Activated T-helper 2 cell treated with anti-CD3 and anti-CD28 coated beads, Interferon-gamma antibody, Interleukin-2, Interleukin-4, amounts not matched to agents 10 μg/mL and 5 μg/mL and 100 μg/mL, durations not matched to agents 14 hours and 24 hours and 36 hours (primary cell): ENCODE measurements at regions of chr1 and their contacts with region 1.

Region 1: DNA sequence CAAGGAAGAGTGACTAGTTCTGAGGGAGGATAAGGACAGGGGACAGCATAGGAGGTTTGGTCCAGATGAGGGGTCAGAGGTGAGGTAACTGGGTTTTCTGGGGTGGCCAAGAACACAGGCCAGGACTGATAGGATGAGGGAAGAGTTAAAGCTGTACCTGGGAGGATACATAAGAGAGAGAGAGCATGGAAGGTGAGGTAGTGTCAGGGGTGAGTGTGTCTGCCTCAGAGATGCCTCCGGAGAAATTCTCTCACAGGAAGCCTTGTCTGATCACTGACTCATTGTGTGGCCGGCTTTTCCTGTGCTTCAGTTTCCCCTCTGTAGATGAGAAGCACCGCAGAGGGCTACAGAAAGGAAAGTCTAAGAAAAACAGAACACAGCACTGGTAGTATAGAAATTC is 40.2 kb downstream of the FASLG start:
- DNase-seq: peak; percentile 72
- H3K4me3 Mint-ChIP-seq: peak overlapping the region; percentile 41
- H3K27ac Mint-ChIP-seq: peak overlapping the region; percentile 91
- H3K4me1 Mint-ChIP-seq: peaks cover 54% of the 10 kb centered on the region
- H3K27me3 Mint-ChIP-seq: no peaks in the 10 kb centered on the region

Region 2: DNA sequence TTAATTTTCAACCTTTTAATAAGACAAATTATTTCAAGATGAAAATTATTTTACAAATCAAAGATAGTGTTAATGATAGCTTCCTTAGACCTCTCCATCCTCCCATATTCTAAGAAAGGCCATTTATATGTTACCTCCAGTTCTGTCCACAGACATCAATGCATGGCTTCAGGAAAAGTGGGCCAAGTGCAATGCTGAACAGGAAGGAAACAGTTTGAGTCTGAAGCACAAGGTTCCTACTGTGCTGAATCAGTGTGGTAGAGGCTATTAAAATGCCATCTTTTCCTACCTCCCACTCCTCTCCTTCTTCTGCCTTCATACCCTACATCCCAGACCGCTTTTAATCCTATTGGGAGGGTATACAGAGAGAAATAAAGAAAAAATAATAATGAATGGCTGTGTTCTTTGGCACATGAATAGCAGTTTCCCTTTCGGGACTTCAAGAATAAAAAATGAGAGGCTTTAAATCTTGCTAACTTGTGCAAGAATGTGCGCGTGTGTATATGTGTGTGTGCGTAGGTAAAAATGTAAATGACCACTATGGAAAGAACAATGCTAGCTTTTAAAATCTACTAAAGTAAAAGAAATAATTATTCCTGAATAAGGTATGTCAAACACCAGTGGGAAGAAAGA is 341.2 kb before region 1 on chr1:
- intact Hi-C with region 1: loop called (anchors 5 kb)
- DNase-seq: no peak
- H3K4me3 Mint-ChIP-seq: no peak overlapping the region
- H3K27ac Mint-ChIP-seq: peak overlapping the region; percentile 82
- H3K4me1 Mint-ChIP-seq: peaks cover 52% of the 10 kb centered on the region
- H3K27me3 Mint-ChIP-seq: no peaks in the 10 kb centered on the region

Region 3: GRCh38 chr1:172515927-172516326 is 183.2 kb before region 1 on chr1:
- intact Hi-C with region 1: no loop called
- DNase-seq: no peak
- H3K4me3 Mint-ChIP-seq: no peak overlapping the region
- H3K27ac Mint-ChIP-seq: no peak overlapping the region
- H3K4me1 Mint-ChIP-seq: no peaks in the 10 kb centered on the region
- H3K27me3 Mint-ChIP-seq: peaks cover 18% of the 10 kb centered on the region

Region 4: DNA sequence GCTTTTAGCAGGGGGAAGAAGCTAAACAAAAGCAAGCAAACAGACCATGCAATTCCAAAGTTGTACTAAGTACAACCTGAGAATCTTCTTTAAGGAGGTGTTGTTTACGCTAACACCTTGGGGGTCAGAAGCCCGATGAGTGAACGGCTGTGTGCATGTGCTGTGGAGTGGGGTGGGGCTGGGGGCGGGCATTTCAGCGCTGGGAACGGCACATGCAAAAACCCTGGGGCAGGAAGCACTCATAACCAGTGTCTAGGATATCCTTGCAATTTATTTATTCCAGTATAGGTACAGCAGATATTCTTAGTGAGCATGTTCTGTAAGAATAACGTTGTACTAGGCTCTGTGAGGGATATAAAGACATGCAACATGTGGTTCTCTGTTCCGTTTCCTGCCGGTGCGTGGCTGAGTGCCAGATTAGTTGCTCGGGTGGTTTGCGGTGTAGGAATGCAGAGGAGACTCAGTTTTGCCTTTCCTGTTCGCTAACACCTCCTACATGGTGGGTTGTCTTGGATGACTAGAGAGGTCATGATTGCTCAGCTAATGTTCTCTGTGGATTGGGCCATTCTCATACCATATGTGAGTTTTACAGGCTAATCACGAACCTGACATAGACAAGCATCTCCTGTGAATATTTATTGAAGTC is 36.5 kb before region 1 on chr1:
- intact Hi-C with region 1: loop called (anchors 1 kb)
- DNase-seq: peak; percentile 80
- H3K4me3 Mint-ChIP-seq: peak overlapping the region; percentile 90
- H3K27ac Mint-ChIP-seq: peak overlapping the region; percentile 94
- H3K4me1 Mint-ChIP-seq: peaks cover 74% of the 10 kb centered on the region
- H3K27me3 Mint-ChIP-seq: no peaks in the 10 kb centered on the region

Region 5: GRCh38 chr1:172719694-172720138 is 20.6 kb after region 1 on chr1:
- intact Hi-C with region 1: loop called (anchors 2 kb)
- DNase-seq: no peak
- H3K4me3 Mint-ChIP-seq: no peak overlapping the region
- H3K27ac Mint-ChIP-seq: no peak overlapping the region
- H3K4me1 Mint-ChIP-seq: peaks cover 47% of the 10 kb centered on the region
- H3K27me3 Mint-ChIP-seq: no peaks in the 10 kb centered on the region